Activated CD8-positive, alpha-beta T cell treated with anti-CD3 and anti-CD28 coated beads for 36 hours (primary cell): ENCODE measurements at regions of chr1 and their contacts with region 1.

Region 1: GRCh38 chr1:60978421-60979357 is 103.7 kb upstream of the NFIA start:
- DNase-seq: peak; percentile 53
- ATAC-seq: peak; percentile 88
- H3K4me3 Mint-ChIP-seq: no peak overlapping the region
- H3K27ac Mint-ChIP-seq: no peak overlapping the region
- H3K4me1 Mint-ChIP-seq: peaks cover 2% of the 10 kb centered on the region
- H3K27me3 Mint-ChIP-seq: peaks cover 2% of the 10 kb centered on the region
- CTCF ChIP-seq: peak; percentile 33

Region 2: GRCh38 chr1:60963167-60963940 is 15.3 kb before region 1 on chr1:
- CTCF ChIA-PET with region 1: no interaction called
- POLR2A ChIA-PET with region 1: no interaction called
- intact Hi-C with region 1: no loop called
- DNase-seq: no peak
- ATAC-seq: no peak
- H3K4me3 Mint-ChIP-seq: no peak overlapping the region
- H3K27ac Mint-ChIP-seq: no peak overlapping the region
- H3K4me1 Mint-ChIP-seq: no peaks in the 10 kb centered on the region
- H3K27me3 Mint-ChIP-seq: peaks cover 9% of the 10 kb centered on the region
- CTCF ChIP-seq: no peak

Region 3: DNA sequence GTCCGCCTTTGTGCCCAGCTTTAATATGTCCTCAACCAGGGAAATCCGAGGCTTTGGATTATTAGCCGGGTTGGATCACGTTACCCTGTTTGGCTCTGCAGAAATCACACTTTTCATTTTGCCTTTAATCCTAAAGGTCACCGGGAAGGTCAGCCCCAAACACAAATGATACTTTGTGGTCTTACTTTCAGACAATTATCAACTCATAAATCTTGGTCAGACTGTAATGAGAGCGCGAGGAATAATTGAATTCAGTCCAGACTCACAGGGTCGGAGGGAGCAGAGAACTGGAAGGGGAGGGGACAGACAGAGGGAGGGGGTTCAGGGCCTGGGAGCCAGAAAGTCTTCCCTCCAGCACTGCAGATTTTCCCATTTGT is 12.0 kb after region 1 on chr1:
- CTCF ChIA-PET with region 1: interaction called, 10 read pairs
- POLR2A ChIA-PET with region 1: no interaction called
- intact Hi-C with region 1: no loop called
- DNase-seq: no peak
- ATAC-seq: no peak
- H3K4me3 Mint-ChIP-seq: no peak overlapping the region
- H3K27ac Mint-ChIP-seq: no peak overlapping the region
- H3K4me1 Mint-ChIP-seq: no peaks in the 10 kb centered on the region
- H3K27me3 Mint-ChIP-seq: no peaks in the 10 kb centered on the region
- CTCF ChIP-seq: no peak

Region 4: DNA sequence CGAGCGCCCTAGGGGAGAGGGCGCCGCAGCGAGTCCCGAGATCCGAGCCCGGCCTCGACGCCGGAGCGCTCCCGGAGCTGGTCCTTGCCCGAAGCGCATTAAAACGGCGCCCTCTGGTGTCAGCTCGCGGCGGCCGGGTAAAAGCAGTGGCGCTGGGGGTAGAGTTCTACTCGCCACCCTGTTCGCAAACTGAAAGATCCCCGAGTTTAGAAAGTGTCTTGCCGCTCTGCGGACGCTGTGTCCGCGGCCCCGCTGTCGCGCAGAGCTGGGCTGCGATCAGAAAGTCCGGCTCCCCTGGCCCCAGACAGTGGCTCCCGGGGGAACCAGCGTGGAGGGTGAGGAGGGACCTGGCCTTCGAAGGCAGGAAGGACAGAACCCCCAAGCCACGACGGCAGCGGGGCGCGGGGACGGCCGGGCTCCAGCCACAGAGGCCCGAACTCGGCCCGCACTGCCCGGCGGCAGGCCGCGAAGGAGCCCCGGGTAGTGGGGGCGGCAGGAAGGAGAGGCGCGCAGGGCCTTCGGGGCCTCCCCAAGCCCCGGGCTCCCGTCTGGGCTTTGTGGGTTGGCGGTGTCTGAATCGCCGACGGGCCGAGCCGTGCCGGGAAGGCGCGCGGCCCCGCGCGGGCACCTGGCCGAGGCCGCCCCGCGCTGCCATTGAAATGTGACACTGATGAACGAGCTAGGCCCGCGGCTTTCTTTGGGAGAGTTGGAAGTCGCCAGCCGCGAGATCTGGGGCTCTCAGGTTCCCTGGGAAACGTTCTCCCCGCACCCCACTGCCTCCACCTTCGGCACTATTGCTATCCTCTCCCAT is 64.5 kb after region 1 on chr1:
- CTCF ChIA-PET with region 1: interaction called, 35 read pairs
- POLR2A ChIA-PET with region 1: no interaction called
- intact Hi-C with region 1: no loop called
- DNase-seq: peak; percentile 90
- ATAC-seq: peak; percentile 97
- H3K4me3 Mint-ChIP-seq: peak overlapping the region; percentile 67
- H3K27ac Mint-ChIP-seq: no peak overlapping the region
- H3K4me1 Mint-ChIP-seq: peaks cover 2% of the 10 kb centered on the region
- H3K27me3 Mint-ChIP-seq: peaks cover 24% of the 10 kb centered on the region
- CTCF ChIP-seq: peak; percentile 86

Region 5: GRCh38 chr1:61083807-61084440 is 105.2 kb after region 1 on chr1:
- CTCF ChIA-PET with region 1: no interaction called
- POLR2A ChIA-PET with region 1: no interaction called
- intact Hi-C with region 1: no loop called
- DNase-seq: no peak
- ATAC-seq: no peak
- H3K4me3 Mint-ChIP-seq: peak overlapping the region; percentile 75
- H3K27ac Mint-ChIP-seq: peak overlapping the region; percentile 16
- H3K4me1 Mint-ChIP-seq: peaks cover 31% of the 10 kb centered on the region
- H3K27me3 Mint-ChIP-seq: peaks cover 8% of the 10 kb centered on the region
- CTCF ChIP-seq: no peak